Breast epithelium (tissue), 4 donors: ENCODE measurements at regions of chr5 and their contacts with region 1.

Region 1: DNA sequence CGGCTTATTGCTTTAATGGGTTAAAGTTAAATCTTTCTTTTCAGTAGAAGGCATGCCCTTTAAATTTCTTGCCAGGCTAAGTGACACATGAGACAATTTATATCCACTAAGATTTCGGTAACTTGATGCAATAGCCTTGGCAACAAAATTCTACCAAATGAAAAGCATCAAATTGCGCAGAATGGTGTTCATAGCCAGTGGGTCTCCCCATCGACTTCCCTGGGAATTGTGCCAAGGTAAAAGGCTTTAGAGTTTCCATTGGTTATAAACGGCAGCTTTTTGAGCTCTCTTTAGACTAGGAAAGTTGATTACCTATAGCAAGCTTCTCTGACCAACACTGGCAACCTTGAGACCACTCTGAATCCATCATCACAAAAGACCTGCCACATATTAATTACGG is 358.4 kb downstream of the ARRDC3 start:
- DNase-seq: no peak
- H3K4me3 ChIP-seq: no peak overlapping the region
- H3K27ac ChIP-seq: no peak overlapping the region
- H3K4me1 ChIP-seq: no peaks in the 10 kb centered on the region
- H3K27me3 ChIP-seq: no peaks in the 10 kb centered on the region
- CTCF ChIP-seq: no peak
- POLR2A ChIP-seq: no peak

Region 2: DNA sequence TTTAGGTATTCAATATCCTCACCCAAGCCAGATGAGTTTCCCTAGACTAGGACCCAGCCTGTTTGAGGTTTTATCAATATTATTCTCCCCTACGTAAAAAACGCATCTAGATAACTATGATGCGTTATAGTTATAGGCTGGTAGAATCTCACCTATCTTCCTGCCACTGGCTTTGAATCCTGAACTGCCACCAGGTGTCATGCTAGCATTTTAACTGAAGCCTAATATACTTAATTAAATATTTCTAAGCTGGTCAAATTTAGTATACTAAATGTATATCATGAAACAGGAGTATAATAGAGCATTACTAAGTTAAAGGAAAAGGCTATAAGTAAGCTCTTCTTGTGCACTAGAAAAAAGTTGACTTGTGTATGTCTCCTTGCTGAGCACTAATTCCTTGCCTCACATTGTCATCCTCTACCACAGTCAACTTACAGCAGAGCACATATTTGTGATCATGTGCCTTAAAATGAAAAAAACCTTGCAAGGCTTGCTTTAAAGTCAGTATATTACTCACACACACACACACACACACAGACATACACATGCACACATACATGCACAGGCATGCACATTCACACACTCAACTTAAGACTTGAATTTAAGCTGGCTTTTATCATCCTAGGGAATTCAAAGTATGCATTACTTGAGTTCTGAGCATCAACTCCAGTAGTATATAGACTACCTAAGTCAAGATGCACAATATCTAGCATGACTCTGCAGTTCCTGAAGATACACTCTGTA is 162.7 kb before region 1 on chr5:
- intact Hi-C with region 1: no loop called
- DNase-seq: no peak
- H3K4me3 ChIP-seq: no peak overlapping the region
- H3K27ac ChIP-seq: no peak overlapping the region
- H3K4me1 ChIP-seq: no peaks in the 10 kb centered on the region
- H3K27me3 ChIP-seq: no peaks in the 10 kb centered on the region
- CTCF ChIP-seq: no peak
- POLR2A ChIP-seq: no peak

Region 3: DNA sequence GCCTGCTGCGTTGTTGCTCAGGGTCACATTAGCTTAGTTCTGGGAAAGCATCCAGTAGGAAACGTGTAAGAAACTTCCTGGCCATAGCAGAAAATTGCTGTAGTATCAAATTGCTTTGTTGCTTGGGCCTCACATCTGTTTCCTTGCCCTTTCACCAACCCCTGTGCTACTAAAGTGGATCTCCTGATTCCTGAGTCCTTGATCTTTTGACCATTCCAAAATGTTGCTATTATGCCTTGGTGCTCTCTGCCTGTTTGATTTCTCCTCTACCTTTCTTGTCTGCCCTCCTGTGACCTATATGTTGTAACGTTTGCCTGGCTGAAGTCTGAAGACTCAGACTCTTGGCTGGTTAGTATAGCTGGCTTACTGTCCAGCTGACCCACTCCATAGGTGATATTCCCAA is 115.6 kb before region 1 on chr5:
- intact Hi-C with region 1: no loop called
- DNase-seq: no peak
- H3K4me3 ChIP-seq: no peak overlapping the region
- H3K27ac ChIP-seq: no peak overlapping the region
- H3K4me1 ChIP-seq: no peaks in the 10 kb centered on the region
- H3K27me3 ChIP-seq: no peaks in the 10 kb centered on the region
- CTCF ChIP-seq: no peak
- POLR2A ChIP-seq: no peak

Region 4: DNA sequence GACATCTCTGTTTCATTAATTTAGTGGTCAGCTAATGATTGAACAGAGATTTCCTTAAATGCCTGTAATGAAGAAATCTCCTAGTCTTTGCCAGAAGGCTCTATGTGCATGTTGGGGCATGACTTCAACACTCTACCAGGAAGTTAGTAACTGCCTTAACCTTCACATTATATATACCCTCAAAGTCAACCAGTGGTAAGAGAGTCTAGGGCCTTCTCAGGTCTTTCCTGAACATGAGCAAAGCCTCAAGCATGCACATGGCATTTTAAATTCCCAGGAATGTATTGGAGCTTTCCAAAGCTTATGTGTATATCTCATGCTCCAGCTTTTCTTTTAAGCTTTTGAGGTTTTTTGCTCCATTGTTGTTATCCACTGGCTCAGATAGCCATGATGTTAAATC is 29.9 kb before region 1 on chr5:
- intact Hi-C with region 1: no loop called
- DNase-seq: no peak
- H3K4me3 ChIP-seq: no peak overlapping the region
- H3K27ac ChIP-seq: no peak overlapping the region
- H3K4me1 ChIP-seq: no peaks in the 10 kb centered on the region
- H3K27me3 ChIP-seq: no peaks in the 10 kb centered on the region
- CTCF ChIP-seq: no peak
- POLR2A ChIP-seq: no peak

Region 5: GRCh38 chr5:91139572-91140200 is 115.0 kb after region 1 on chr5:
- intact Hi-C with region 1: loop called (anchors 5 kb)
- DNase-seq: no peak
- H3K4me3 ChIP-seq: no peak overlapping the region
- H3K27ac ChIP-seq: peak overlapping the region; percentile 67 to 77
- H3K4me1 ChIP-seq: no peaks in the 10 kb centered on the region
- H3K27me3 ChIP-seq: no peaks in the 10 kb centered on the region
- CTCF ChIP-seq: no peak
- POLR2A ChIP-seq: no peak